ENCODE measurements at regions of chr4 and their contacts with region 1.

Region 1: GRCh38 chr4:2220016-2220630 is 21.8 kb downstream of the HAUS3 start:
- DNase-seq: peak; percentile 82
- H3K4me3 Mint-ChIP-seq: no peak overlapping the region
- H3K27ac Mint-ChIP-seq: no peak overlapping the region
- H3K4me1 Mint-ChIP-seq: peaks cover 16% of the 10 kb centered on the region
- H3K27me3 Mint-ChIP-seq: no peaks in the 10 kb centered on the region

Region 2: GRCh38 chr4:1879485-1879884 is 340.6 kb before region 1 on chr4:
- CTCF ChIA-PET with region 1: no interaction called
- POLR2A ChIA-PET with region 1: no interaction called
- DNase-seq: no peak
- H3K4me3 Mint-ChIP-seq: no peak overlapping the region
- H3K27ac Mint-ChIP-seq: peak overlapping the region; percentile 38
- H3K4me1 Mint-ChIP-seq: peaks cover 66% of the 10 kb centered on the region
- H3K27me3 Mint-ChIP-seq: no peaks in the 10 kb centered on the region

Region 3: GRCh38 chr4:2231082-2231481 is 11.0 kb after region 1 on chr4:
- CTCF ChIA-PET with region 1: interaction called, 25 read pairs
- POLR2A ChIA-PET with region 1: interaction called, 7 read pairs
- DNase-seq: no peak
- H3K4me3 Mint-ChIP-seq: no peak overlapping the region
- H3K27ac Mint-ChIP-seq: no peak overlapping the region
- H3K4me1 Mint-ChIP-seq: peaks cover 21% of the 10 kb centered on the region
- H3K27me3 Mint-ChIP-seq: no peaks in the 10 kb centered on the region

Region 4: DNA sequence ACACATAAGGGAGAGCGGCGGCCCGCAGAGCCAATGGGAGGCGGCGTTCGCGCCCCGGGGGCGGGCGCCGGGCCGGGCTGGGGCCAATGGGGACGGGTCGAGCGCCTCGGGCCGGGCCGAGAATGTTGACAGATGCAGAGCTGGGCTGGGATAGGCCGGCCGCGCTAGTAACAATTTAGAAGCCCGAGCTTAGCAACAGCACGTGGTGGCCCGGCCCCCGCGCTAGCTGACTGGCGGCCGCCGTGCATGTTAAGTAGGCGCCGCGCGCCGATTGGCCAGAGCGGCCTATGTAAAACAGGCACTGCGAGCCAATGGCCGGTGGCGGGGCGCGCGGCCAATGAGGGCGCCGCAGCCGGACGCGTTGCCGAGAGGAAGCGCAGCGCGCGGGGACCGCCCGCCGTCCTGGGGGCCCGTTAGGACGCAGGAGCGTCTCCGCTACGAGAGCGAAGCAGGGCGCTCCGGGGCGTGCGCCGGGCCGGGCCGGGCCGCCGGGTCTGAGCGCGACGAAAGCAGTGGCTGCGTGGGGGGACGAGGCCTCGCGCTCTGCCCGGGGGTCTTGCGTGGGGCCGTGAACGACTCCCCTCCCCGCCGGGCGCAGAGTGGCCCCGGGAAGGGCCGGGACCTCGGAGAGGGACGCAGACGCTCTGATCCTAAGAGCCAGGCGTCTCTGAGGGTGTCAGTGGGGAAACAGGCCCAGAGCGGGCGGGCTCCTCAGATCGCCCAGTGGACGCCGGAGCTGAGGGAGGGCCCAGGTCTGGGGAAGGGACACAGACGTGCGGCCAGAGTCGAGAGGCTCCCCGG is 42.2 kb after region 1 on chr4:
- CTCF ChIA-PET with region 1: interaction called, 13 read pairs
- POLR2A ChIA-PET with region 1: no interaction called
- DNase-seq: peak; percentile 99
- H3K4me3 Mint-ChIP-seq: peak overlapping the region; percentile 73
- H3K27ac Mint-ChIP-seq: peak overlapping the region; percentile 68
- H3K4me1 Mint-ChIP-seq: peaks cover 4% of the 10 kb centered on the region
- H3K27me3 Mint-ChIP-seq: no peaks in the 10 kb centered on the region

Region 5: DNA sequence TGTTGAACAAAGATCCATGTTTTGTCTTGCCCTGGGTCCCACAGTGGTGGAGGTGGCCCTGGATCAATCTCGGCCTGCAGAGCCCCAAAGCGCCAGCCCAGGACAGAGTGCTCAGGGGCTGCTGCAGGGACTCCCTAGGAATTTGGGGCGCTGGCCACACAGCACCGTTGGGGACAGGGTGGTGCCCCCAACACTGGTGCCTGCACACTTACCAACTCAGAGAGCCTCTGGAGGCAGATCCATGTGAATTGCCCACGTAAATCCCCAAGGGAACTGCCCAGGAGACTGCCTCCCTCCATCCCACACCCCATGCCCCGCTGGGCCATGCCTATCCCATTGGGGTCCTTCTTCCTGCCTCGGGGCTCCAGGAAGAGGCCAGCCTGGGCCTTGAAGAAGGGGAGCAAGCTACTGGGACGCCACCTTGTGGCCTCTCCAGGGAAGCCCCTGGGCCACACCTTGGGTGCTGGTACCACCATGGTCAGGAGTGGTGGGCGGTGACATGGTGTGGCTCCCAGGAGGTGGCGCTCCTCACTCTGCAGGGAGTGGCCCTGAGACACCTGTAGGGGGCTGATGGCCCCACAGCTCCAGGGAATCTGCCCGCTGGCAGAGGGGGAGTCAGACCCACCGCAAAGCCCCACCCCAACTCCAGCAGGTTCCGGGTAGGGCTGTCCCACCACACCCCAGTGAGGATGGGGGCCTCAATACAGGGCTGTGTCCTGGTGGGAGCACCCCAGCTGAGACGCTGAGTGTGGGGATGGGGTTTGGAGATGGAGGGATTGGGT is 221.5 kb after region 1 on chr4:
- CTCF ChIA-PET with region 1: interaction called, 19 read pairs
- POLR2A ChIA-PET with region 1: no interaction called
- DNase-seq: peak; percentile 82
- H3K4me3 Mint-ChIP-seq: no peak overlapping the region
- H3K27ac Mint-ChIP-seq: no peak overlapping the region
- H3K4me1 Mint-ChIP-seq: peaks cover 5% of the 10 kb centered on the region
- H3K27me3 Mint-ChIP-seq: no peaks in the 10 kb centered on the region

Region 6: DNA sequence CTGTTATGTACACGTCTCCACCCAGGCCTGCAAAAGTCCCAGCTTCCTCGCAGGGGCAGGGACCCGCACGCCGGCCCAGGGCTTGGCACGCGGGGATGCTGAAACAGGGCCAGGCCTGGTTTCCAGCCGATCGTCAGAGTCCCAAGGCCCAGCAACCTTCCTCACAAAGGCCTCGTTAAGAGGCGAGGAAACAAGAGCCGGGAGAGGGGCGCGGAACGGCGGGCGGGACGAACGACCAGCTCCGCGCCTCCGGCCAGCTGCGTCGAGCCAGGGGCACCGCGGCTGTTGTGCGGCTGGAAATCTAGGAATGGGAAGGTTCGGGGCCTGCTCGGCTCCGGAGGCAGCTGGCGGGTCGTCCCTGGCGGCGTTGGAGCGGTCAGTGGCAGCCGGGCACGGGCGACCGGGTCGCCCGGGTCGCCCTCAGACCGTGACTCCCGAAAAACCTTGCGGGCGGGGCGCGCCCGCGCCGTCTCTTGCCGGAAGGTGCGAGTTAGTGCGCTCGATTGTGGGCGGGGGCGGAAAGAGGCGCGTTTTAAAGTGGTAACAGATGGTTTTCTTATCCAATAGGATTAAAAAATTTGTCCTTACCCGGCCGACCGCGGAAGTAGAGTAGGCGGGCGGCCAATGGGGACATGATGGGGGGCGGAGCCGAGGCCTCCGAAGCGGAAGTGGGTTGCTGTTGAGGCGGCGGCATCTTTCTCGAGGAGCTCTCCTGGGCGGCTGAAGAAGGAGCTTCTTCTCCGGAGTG is 248.5 kb after region 1 on chr4 and contains the start of gene RNF4:
- CTCF ChIA-PET with region 1: interaction called, 18 read pairs
- POLR2A ChIA-PET with region 1: interaction called, 4 read pairs
- DNase-seq: peak; percentile 97
- H3K4me3 Mint-ChIP-seq: peak within 1 kb of the TSS; percentile 97
- H3K27ac Mint-ChIP-seq: peak within 1 kb of the TSS; percentile 98
- H3K4me1 Mint-ChIP-seq: peaks cover 52% of the 10 kb centered on the region
- H3K27me3 Mint-ChIP-seq: peaks cover 2% of the 10 kb centered on the region
- total RNA-seq, gene RNF4: 106 to 113 TPM

Measured in activated CD4-positive, alpha-beta memory T cell treated with anti-CD3 and anti-CD28 coated beads, Interleukin-2, amount 10 ng/mL, durations not matched to agents 7 days and 5 days (primary cell).